Activated B cell treated with CpG ODN at 0.5 μM for 24 hours (primary cell): ENCODE measurements at regions of chr3 and their contacts with region 1.

Region 1: DNA sequence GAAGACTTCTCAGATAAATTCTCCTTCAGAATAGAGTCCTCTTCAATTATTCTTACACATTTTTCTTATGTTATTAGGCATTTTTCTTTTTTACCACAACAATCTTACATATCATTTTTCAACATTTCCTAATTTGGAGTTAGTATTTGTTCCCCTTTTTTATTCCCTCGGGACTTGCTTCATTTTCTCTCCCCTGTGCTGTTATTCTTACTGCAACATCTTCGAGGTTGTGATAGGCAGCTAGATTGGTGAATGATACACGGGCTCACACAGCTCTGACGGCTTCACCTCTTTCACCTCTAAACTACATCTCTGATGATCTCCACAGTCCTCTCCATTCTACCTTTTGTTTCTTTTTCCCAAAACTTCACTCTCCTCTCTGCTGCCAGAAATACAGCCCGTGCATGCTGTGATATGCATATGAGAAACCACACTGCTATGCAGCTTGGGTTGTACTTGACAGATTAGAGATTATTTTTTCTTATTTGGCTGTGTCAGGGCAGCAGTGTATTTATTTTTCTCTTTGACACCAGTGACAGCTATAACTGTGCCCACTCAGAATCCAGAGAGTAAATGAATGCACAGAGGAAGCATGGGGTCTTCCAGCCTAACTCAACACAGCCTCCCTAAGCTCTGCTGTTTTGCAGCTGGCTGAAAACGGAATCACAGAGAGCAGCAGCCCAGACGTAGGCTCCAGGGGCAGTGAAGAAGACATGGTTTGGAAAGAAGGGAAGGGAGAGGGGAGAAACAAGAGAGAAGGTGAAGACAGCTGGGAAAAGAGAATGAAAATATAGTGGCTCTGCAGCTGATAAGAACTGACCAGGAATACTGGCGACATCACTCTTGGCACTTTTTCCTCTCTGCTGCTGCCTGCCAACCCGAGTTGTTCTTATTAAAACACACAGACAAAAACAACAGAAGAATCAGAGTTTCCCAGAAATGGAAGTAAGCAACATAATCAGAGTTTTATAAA is 61.8 kb downstream of the SLC9A9 start:
- DNase-seq: no peak
- ATAC-seq: peak; percentile 89
- H3K4me3 Mint-ChIP-seq: peak overlapping the region; percentile 9
- H3K27ac Mint-ChIP-seq: no peak overlapping the region
- H3K4me1 Mint-ChIP-seq: peaks cover 14% of the 10 kb centered on the region
- H3K27me3 Mint-ChIP-seq: no peaks in the 10 kb centered on the region
- CTCF ChIP-seq: no peak

Region 2: DNA sequence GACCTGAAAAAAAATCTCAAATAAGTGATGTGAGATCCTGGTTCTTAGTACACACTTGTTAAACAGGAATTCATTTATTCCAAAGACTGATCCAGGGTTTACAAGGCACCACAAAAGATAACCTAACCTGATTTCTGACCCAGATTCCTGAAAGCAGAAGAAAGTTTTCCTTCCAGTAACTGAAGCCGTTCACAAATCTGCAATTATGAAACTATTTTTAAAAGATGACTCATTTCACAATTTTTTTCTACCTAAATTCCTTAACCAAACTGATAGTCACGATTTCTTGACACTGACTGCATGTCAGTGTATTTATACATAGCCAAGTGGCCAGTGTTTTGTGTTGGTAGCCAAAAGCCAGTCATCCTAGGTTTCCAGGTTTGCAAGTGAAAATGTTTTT is 44.7 kb after region 1 on chr3:
- CTCF ChIA-PET with region 1: no interaction called
- POLR2A ChIA-PET with region 1: no interaction called
- intact Hi-C with region 1: loop called (anchors 5 kb)
- DNase-seq: no peak
- ATAC-seq: peak; percentile 34
- H3K4me3 Mint-ChIP-seq: no peak overlapping the region
- H3K27ac Mint-ChIP-seq: no peak overlapping the region
- H3K4me1 Mint-ChIP-seq: peaks cover 29% of the 10 kb centered on the region
- H3K27me3 Mint-ChIP-seq: no peaks in the 10 kb centered on the region
- CTCF ChIP-seq: no peak